Sigmoid colon (tissue), 7 donors: ENCODE measurements at regions of chr16 and their contacts with region 1.

Region 1: DNA sequence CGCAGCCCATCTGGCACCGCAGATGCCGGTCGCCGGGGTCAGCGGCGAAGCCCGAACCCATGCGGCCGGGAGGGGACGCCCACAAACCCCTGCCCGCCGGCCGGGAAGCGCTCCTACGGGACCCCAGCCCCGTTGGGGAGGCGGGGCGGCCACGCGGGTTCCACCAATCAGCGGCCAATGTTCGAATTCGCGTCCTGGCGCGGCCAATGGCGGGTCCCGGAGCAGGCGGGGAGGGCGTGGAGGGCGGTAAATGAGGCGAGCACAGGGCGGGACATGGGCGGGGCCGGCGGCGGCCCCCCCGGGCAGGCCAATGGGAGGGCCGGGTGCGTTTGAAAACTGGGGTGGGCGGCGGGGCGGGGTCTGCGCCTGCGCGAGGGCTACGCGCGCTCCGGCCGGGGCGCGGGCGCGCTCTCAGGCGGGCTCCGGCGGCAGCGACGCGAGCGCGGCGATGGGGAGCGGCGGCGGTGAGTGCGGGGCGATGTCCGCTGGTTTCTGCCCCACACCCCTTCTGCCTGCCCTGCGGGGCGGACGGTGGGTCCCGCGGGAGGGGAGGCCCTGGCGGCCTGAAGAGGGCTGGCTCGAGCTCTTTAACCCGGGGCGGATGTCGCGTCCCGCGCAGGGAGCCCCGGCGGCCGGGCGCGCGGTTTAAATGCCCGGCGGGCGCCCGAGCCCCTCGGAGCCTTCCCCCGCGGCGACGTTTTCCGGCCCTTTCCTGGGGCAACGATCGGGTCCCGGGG is at the start of gene CCNF:
- DNase-seq: peak; percentile 98
- H3K4me3 ChIP-seq: peak within 1 kb of the TSS; percentile 76 to 91 (median 80)
- H3K27ac ChIP-seq: peak within 1 kb of the TSS; percentile 75 to 81 (median 77)
- H3K4me1 ChIP-seq: peaks cover 0 to 18% (median 14%) of the 10 kb centered on the region in 4 donors
- H3K27me3 ChIP-seq: no peaks in the 10 kb centered on the region
- CTCF ChIP-seq: no peak
- EP300 ChIP-seq: no peak
- POLR2A ChIP-seq: no peak
- total RNA-seq, gene CCNF: 0.71 to 1.9 (median 1.1) TPM

Region 2: DNA sequence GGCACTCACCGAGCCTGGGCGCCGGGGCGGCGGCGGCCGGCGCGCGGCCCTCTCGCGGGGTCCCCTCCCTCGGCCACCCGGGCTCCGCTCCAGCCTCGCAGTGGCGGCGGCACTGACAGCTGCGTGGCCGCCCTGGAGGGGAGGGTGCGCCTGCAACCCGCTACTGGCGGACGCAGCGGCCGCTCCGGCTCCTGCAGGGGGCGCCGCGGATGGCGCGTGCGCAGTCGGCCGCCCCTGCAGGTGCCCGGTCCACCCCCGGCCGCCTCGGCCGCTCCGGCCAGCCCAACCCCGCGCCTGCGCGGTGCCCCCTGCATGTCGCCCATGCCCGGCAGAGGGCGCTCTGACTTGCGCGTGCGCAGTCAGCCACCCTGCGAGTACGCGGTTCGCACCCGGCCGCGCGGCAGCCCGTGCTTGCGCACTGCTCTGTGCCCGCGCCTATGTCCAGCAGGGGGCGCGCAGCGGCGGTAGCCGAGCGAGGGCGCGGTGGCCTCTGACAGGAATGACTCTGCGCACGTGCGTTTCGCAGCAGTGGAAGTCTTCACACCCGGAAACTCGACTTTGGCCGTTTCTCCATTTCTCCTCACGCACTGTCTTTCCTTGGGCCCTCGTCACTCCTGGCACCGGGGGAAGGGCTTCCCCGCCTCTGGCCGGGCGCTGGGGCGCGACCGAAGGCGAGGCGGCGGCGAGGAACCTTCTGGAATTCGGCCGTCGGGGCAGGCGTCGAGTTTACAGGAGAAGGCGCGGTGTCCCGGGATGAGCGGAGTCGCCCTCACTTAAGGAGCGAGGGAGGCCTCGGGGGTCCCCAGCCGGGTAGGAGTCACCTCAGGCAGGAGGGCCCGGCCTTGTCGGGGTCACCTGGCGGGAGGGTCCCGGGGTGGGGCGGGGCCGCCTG is 88.4 kb before region 1 on chr16 and contains the start of gene ABCA3:
- intact Hi-C with region 1: loop called (anchors 2 kb)
- DNase-seq: peak; percentile 95
- H3K4me3 ChIP-seq: peak within 1 kb of the TSS; percentile 68 to 82 (median 81)
- H3K27ac ChIP-seq: peak within 1 kb of the TSS; percentile 67 to 76 (median 70)
- H3K4me1 ChIP-seq: peaks cover 0 to 27% (median 22%) of the 10 kb centered on the region in 4 donors
- H3K27me3 ChIP-seq: no peaks in the 10 kb centered on the region
- CTCF ChIP-seq: peak; percentile 98 to 100 (median 99)
- EP300 ChIP-seq: no peak
- POLR2A ChIP-seq: no peak
- total RNA-seq, gene ABCA3: 4.9 to 21.3 (median 7.4) TPM

Region 3: DNA sequence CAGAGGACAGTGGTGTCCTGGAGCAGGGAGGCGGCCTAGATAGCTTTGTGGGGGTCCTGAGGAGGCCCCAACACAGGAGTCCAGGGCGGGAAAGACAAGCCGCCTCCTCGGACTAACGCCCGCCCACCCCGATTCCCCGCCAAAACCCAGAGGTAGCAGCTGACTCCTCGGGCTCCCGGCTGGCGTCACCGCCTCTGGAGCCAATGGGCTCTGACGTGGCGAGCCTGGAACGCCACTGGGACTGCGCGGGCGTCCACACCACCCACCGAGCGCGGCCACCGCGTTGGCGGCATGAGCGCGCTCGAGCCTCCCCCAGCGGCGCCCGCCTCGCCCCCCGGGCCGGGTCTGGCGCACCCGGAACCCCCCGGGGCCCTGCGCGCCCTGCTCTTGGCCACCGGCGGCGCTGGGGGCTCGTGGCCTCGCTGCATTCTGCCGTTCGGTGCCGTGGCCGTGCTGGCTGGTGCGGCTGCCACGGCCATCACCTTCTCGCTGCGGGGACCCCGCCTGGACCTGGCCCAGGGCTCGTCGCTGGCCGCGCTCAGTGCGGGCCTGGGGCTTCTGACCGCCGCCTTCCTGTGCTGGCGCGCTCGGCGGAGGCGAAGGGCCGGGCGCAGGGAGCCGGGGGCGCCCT is 38.4 kb after region 1 on chr16:
- intact Hi-C with region 1: loop called (anchors 2 kb)
- DNase-seq: peak; percentile 96
- H3K4me3 ChIP-seq: peak overlapping the region; percentile 17 to 69 (median 52)
- H3K27ac ChIP-seq: peak overlapping the region in 3 of 4 donors; percentile 50 to 66 (median 53)
- H3K4me1 ChIP-seq: peaks cover 0 to 37% (median 34%) of the 10 kb centered on the region in 4 donors
- H3K27me3 ChIP-seq: peaks cover 26 to 57% (median 40%) of the 10 kb centered on the region in 3 donors
- CTCF ChIP-seq: no peak
- EP300 ChIP-seq: no peak
- POLR2A ChIP-seq: no peak

Region 4: GRCh38 chr16:2482707-2483534 is 53.7 kb after region 1 on chr16:
- intact Hi-C with region 1: loop called (anchors 5 kb)
- DNase-seq: peak; percentile 93
- H3K4me3 ChIP-seq: peak overlapping the region in 3 of 4 donors; percentile 36 to 41 (median 40)
- H3K27ac ChIP-seq: peak overlapping the region; percentile 83 to 91 (median 84)
- H3K4me1 ChIP-seq: peaks cover 0 to 30% (median 26%) of the 10 kb centered on the region in 4 donors
- H3K27me3 ChIP-seq: no peaks in the 10 kb centered on the region
- CTCF ChIP-seq: no peak
- EP300 ChIP-seq: no peak
- POLR2A ChIP-seq: no peak

Region 5: GRCh38 chr16:2883027-2883851 is 454.0 kb after region 1 on chr16 and contains the start of gene FLYWCH2:
- intact Hi-C with region 1: loop called (anchors 5 kb)
- DNase-seq: peak; percentile 99
- H3K4me3 ChIP-seq: peak within 1 kb of the TSS; percentile 67 to 99 (median 80)
- H3K27ac ChIP-seq: peak within 1 kb of the TSS; percentile 94 to 100 (median 98)
- H3K4me1 ChIP-seq: peaks cover 0 to 16% (median 10%) of the 10 kb centered on the region in 4 donors
- H3K27me3 ChIP-seq: no peaks in the 10 kb centered on the region
- CTCF ChIP-seq: peak in 1 of 4 experiments; percentile 13
- EP300 ChIP-seq: no peak
- POLR2A ChIP-seq: peak; percentile 14 to 59
- total RNA-seq, gene FLYWCH2: 33.6 to 64.2 (median 55.8) TPM